Activated naive CD4-positive, alpha-beta T cell treated with anti-CD3 and anti-CD28 coated beads for 36 hours (primary cell): ENCODE measurements at regions of chr1 and their contacts with region 1.

Region 1: GRCh38 chr1:243596431-243597062 is 253.5 kb downstream of the AKT3 start:
- DNase-seq: peak; percentile 28
- H3K4me3 Mint-ChIP-seq: no peak overlapping the region
- H3K27ac Mint-ChIP-seq: no peak overlapping the region
- H3K4me1 Mint-ChIP-seq: peaks cover 24% of the 10 kb centered on the region
- H3K27me3 Mint-ChIP-seq: no peaks in the 10 kb centered on the region

Region 2: DNA sequence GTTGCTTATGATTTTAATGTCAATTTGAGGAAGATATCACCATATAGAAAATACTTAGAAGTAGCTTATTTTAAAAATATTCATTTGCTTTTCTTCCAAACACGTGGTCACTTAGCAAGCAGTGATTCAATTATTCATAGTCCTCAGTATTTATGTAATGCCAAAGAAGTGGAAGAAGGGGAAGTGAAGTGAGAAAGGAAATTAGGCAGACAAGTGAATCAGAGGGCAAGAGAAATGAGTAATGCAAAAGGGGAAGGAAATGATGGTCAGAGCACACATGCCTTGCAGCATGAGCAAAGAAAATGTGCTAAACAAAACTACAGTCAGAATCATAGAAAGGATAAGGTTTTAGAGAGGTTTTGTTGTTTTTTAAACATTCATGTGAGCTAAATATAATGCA is 308.9 kb before region 1 on chr1:
- CTCF ChIA-PET with region 1: no interaction called
- intact Hi-C with region 1: loop called (anchors 1 kb)
- DNase-seq: peak; percentile 23
- H3K4me3 Mint-ChIP-seq: no peak overlapping the region
- H3K27ac Mint-ChIP-seq: peak overlapping the region; percentile 83
- H3K4me1 Mint-ChIP-seq: peaks cover 40% of the 10 kb centered on the region
- H3K27me3 Mint-ChIP-seq: no peaks in the 10 kb centered on the region

Region 3: DNA sequence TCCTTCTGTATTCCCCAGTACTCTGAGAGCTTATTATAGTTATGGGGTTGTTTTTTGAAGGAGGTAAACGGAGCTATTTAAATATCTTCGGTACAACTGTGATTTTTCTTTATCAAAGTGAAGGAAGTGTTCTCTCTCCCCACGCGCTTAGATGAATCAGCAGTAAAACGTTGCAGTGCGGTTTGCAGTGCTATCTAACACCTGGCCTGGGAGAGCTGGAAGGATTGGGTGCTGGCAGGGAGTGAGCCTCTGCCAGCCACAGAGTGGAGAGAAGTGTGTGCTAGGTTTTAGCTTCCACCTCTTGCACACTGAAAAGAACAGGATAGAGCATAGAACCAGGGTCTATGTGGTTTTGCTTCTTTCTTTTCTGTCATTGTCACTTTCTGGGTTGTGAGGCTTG is 174.8 kb before region 1 on chr1:
- CTCF ChIA-PET with region 1: no interaction called
- intact Hi-C with region 1: loop called (anchors 5 kb)
- DNase-seq: peak; percentile 77
- H3K4me3 Mint-ChIP-seq: peak overlapping the region; percentile 50
- H3K27ac Mint-ChIP-seq: no peak overlapping the region
- H3K4me1 Mint-ChIP-seq: peaks cover 25% of the 10 kb centered on the region
- H3K27me3 Mint-ChIP-seq: no peaks in the 10 kb centered on the region

Region 4: GRCh38 chr1:243447347-243447746 is 149.2 kb before region 1 on chr1:
- CTCF ChIA-PET with region 1: no interaction called
- intact Hi-C with region 1: no loop called
- DNase-seq: no peak
- H3K4me3 Mint-ChIP-seq: no peak overlapping the region
- H3K27ac Mint-ChIP-seq: no peak overlapping the region
- H3K4me1 Mint-ChIP-seq: peaks cover 3% of the 10 kb centered on the region
- H3K27me3 Mint-ChIP-seq: no peaks in the 10 kb centered on the region

Region 5: GRCh38 chr1:243658594-243659105 is 62.1 kb after region 1 on chr1:
- CTCF ChIA-PET with region 1: no interaction called
- intact Hi-C with region 1: no loop called
- DNase-seq: no peak
- H3K4me3 Mint-ChIP-seq: no peak overlapping the region
- H3K27ac Mint-ChIP-seq: no peak overlapping the region
- H3K4me1 Mint-ChIP-seq: no peaks in the 10 kb centered on the region
- H3K27me3 Mint-ChIP-seq: no peaks in the 10 kb centered on the region

Region 6: DNA sequence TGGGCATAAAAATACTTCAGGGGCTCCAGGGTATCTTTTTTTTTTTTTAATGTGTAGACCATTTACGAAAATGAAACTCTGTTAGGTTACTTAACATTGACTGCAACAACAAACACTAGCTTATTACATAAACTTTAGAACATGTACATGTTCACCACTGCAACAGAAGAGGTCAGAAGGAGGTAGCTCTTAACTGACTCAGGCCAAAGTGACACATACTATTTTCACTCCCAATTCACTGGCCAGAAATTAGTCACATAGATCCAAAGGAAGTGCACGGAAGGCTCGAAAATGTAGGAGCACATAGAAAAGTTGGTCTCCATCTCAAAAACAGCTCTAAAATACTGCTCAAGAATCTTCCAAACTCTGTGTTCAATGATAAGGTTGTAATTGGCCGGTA is 146.3 kb after region 1 on chr1:
- CTCF ChIA-PET with region 1: no interaction called
- intact Hi-C with region 1: no loop called
- DNase-seq: no peak
- H3K4me3 Mint-ChIP-seq: no peak overlapping the region
- H3K27ac Mint-ChIP-seq: no peak overlapping the region
- H3K4me1 Mint-ChIP-seq: peaks cover 18% of the 10 kb centered on the region
- H3K27me3 Mint-ChIP-seq: no peaks in the 10 kb centered on the region

Region 7: DNA sequence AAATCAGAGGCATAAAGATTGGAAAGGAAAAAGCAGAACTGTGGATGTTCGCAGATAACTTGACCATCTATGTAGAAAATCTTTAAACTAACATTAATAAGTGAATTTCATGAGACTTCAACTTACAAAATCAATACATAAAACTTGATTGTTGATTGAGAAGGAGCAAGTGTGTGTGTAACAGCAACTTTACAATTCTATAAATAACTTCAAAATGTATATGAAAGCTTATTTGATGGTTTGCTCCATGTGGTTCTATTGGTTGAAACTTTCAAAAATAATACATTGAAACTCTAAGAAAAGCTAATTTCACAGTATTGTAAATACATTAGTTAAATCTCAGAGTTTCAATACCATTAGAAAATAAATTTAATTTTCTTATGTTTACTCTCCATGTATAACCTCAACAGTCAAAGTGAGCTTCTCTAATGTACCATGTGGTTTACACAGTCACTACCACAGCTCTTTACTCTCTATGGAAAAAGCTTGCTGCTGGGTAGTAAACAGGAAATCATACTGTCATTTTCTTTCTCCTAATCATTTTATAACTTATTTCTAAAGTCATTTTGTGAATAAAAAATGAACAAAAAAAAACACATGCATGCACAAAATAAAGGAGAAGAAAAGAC is 241.5 kb after region 1 on chr1:
- CTCF ChIA-PET with region 1: no interaction called
- intact Hi-C with region 1: loop called (anchors 5 kb)
- DNase-seq: no peak
- H3K4me3 Mint-ChIP-seq: no peak overlapping the region
- H3K27ac Mint-ChIP-seq: no peak overlapping the region
- H3K4me1 Mint-ChIP-seq: peaks cover 30% of the 10 kb centered on the region
- H3K27me3 Mint-ChIP-seq: no peaks in the 10 kb centered on the region

Region 8: GRCh38 chr1:244077473-244078220 is 481.1 kb after region 1 on chr1:
- CTCF ChIA-PET with region 1: no interaction called
- intact Hi-C with region 1: no loop called
- DNase-seq: peak; percentile 30
- H3K4me3 Mint-ChIP-seq: no peak overlapping the region
- H3K27ac Mint-ChIP-seq: no peak overlapping the region
- H3K4me1 Mint-ChIP-seq: peaks cover 38% of the 10 kb centered on the region
- H3K27me3 Mint-ChIP-seq: no peaks in the 10 kb centered on the region